ENCODE measurements at regions of chr1 and their contacts with region 1.

Region 1: DNA sequence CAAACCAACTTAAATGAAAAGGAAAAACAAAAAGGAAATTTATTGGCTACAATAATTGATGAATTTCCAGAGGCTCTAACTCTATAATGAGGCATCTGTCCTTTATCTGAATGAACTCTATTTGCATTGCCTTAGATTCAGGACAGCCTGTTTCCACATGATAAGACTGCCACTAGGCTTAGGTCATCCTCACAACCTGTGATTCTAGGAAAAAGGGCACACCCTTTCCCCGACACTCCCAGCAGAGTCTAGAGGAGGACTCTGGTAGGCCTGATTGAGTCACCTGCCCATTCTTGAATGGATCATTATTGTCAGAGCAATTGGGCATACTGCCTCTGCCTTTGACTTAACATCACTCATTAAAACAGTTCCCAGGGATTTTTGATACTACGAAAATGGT is 262.8 kb downstream of the TPR start:
- DNase-seq: no peak
- H3K4me3 ChIP-seq: no peak overlapping the region
- H3K27ac ChIP-seq: peak overlapping the region in 1 of 2 donors; percentile 7
- H3K4me1 ChIP-seq: no peaks in the 10 kb centered on the region
- H3K27me3 ChIP-seq: no peaks in the 10 kb centered on the region
- CTCF ChIP-seq: no peak

Region 2: DNA sequence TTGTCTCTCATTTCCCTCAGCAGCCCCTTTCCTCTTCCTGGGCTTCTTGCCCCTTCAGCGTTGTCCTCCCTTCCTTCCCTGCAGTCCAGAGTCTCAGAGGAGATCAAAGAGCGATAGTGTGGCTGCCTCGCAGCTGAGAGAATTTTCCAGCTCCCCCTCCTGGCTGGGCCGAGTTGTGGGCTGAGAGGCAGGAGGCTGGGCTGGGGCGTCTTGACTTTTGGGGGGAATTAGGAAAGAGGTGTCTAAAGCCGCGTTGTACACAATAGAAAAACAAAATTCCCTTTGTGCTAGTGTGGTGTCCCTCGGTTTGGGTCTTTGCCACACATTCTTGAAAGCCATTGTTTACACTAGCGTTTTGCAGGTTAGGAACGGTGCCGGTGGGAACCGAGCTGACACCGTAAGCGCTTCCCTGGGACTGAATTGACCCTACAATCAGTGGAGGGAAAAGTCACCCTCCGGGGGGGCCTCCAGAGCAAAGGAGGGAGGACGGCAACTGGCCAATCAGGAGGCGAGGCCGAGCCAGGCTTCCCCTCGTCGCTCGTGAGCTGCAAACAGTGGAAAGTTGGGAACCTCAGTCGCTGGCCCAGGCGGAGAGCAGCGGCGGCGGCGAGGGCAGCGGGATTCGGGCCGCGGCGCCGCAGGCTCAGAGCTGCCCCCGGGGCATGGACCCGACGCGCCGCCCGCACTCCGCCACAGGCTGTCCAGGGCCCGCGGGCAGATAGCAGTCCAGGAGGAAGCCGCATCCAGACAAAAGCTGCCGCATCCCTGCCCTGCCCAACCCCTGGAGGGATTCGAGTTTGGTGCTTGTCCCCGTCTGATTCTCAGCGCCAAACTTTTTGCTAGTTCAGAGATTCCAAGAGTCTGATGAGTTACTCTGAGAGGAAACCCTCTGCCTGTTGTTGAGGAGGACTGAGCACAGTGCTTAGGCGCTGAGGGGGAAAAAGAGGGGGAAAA is 378.2 kb before region 1 on chr1 and contains the start of gene HMCN1:
- intact Hi-C with region 1: no loop called
- DNase-seq: peak in 1 of 2 donors; percentile 91
- H3K4me3 ChIP-seq: peak within 1 kb of the TSS; percentile 53 to 84
- H3K27ac ChIP-seq: peak within 1 kb of the TSS; percentile 88 to 95
- H3K4me1 ChIP-seq: peaks cover 0 to 7% of the 10 kb centered on the region in 2 donors
- H3K27me3 ChIP-seq: no peaks in the 10 kb centered on the region
- CTCF ChIP-seq: peak in 2 of 3 experiments; percentile 14 to 52
- total RNA-seq, gene HMCN1: 61.7 TPM

Region 3: DNA sequence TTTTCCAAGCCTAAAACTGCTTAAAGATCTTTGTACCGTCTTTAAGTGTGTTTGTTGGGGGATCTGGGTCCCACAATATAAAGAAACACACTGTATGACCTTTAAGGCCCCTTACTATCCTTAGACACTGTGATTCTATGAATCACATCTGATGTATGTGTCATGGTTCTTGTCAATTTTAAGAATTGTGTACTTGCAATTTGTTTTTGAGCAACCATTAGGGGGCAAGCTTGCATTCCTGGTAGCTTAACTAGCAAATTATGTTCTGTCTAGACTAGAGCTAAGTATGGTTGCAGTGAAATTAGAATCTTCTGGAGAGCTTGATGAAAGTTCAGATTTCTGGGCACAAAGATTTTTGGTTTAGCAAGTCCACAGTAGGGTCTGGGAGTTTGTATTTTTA is 43.3 kb after region 1 on chr1:
- intact Hi-C with region 1: loop called (anchors 5 kb)
- DNase-seq: no peak
- H3K4me3 ChIP-seq: no peak overlapping the region
- H3K27ac ChIP-seq: peak overlapping the region in 1 of 2 donors; percentile 15
- H3K4me1 ChIP-seq: peaks cover 0 to 13% of the 10 kb centered on the region in 2 donors
- H3K27me3 ChIP-seq: no peaks in the 10 kb centered on the region
- CTCF ChIP-seq: peak; percentile 16 to 50 (median 26)